Left ventricle myocardium inferior (tissue), 1 donor: ENCODE measurements at regions of chr3 and their contacts with region 1.

Region 1: GRCh38 chr3:159804726-159805410 is 183.8 kb upstream of the IL12A start:
- DNase-seq: peak; percentile 37
- H3K4me3 ChIP-seq: no peak overlapping the region
- H3K27ac ChIP-seq: peak overlapping the region; percentile 61
- H3K4me1 ChIP-seq: peaks cover 78% of the 10 kb centered on the region
- H3K27me3 ChIP-seq: no peaks in the 10 kb centered on the region
- CTCF ChIP-seq: peak; percentile 93

Region 2: GRCh38 chr3:159260049-159260662 is 544.7 kb before region 1 on chr3:
- intact Hi-C with region 1: loop called (anchors 10 kb)
- DNase-seq: no peak
- H3K4me3 ChIP-seq: no peak overlapping the region
- H3K27ac ChIP-seq: no peak overlapping the region
- H3K4me1 ChIP-seq: no peaks in the 10 kb centered on the region
- H3K27me3 ChIP-seq: no peaks in the 10 kb centered on the region
- CTCF ChIP-seq: peak; percentile 73

Region 3: DNA sequence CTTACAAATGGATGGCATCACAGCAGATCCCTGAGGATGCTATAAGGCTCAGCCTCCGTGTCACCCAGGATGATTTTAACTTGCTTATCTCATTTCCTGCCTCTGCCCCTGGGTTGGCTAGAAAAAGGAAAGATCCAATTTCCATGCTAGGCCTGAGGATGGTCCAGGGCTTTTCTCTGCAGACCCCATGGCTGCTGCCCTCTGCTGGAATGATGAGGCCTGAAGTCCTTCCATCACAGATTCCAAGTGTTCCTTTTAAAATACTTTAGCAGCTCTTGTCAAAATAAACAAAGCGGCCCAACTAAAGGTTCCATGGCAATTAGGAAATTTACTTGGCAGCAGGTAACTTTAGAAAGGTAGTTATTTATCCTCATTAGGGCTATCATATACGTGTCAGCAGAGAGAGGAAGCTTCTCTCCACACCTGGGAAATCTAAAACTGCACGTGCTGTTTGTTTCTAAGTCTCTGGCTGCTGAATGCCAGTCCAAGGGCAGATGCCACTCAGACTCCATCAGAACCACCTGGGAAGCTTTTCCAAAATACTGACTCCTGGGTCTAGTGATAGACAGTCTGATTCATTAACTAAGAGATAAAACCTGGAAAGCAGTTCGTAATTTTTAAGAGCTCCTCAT is 218.2 kb before region 1 on chr3:
- intact Hi-C with region 1: no loop called
- DNase-seq: no peak
- H3K4me3 ChIP-seq: no peak overlapping the region
- H3K27ac ChIP-seq: no peak overlapping the region
- H3K4me1 ChIP-seq: no peaks in the 10 kb centered on the region
- H3K27me3 ChIP-seq: no peaks in the 10 kb centered on the region
- CTCF ChIP-seq: peak; percentile 51

Region 4: GRCh38 chr3:159616212-159616825 is 188.5 kb before region 1 on chr3:
- intact Hi-C with region 1: loop called (anchors 5 kb)
- DNase-seq: peak; percentile 31
- H3K4me3 ChIP-seq: no peak overlapping the region
- H3K27ac ChIP-seq: no peak overlapping the region
- H3K4me1 ChIP-seq: peaks cover 16% of the 10 kb centered on the region
- H3K27me3 ChIP-seq: no peaks in the 10 kb centered on the region
- CTCF ChIP-seq: peak; percentile 75

Region 5: GRCh38 chr3:160150525-160150924 is 345.7 kb after region 1 on chr3:
- intact Hi-C with region 1: no loop called
- DNase-seq: no peak
- H3K4me3 ChIP-seq: no peak overlapping the region
- H3K27ac ChIP-seq: no peak overlapping the region
- H3K4me1 ChIP-seq: no peaks in the 10 kb centered on the region
- H3K27me3 ChIP-seq: no peaks in the 10 kb centered on the region
- CTCF ChIP-seq: no peak